ENCODE measurements at regions of chr5 and their contacts with region 1.

Region 1: DNA sequence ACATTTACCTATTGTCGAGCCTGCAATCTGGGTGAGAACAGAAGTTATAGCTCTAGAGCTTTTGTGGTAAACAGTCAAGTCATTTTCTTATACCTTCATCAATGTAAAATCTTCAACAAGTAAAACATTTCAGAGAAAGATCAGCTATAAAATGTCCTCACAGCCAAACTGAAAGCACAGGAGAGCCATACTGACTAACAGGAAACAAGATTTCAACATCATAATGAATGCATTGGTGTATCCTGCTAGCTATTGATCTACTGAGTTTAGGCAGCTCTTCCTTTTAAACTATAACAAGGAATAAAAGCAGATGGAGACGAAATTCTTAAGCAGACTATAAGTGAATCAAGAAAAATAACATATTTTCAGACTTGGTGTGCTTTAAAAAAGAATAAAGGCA is 1522.9 kb upstream of the WWC1 start:
- DNase-seq: no peak
- H3K4me3 Mint-ChIP-seq: peak overlapping the region; percentile 38
- H3K27ac Mint-ChIP-seq: peak overlapping the region; percentile 28
- H3K4me1 Mint-ChIP-seq: peaks cover 20% of the 10 kb centered on the region
- H3K27me3 Mint-ChIP-seq: no peaks in the 10 kb centered on the region
- CTCF ChIP-seq: no peak

Region 2: DNA sequence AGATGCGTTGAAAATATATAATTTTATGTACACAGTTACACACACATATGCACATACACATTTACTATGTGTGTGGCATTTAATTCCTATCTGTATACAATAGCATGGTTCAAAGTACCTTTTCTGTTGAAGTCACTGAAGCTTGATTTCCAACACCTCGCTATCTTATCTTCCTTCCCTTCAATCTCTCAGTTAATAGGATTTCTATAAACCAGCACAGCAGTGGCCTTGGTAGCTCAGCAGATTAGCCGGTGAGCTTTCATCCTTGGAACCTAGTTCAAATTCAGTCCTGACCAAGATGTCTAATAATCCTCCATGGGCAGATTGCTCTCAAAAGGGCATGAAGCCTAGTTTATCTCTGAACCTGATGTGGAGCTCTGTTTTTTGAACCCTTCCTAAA is 873.6 kb before region 1 on chr5:
- CTCF ChIA-PET with region 1: interaction called, 11 read pairs
- intact Hi-C with region 1: no loop called
- DNase-seq: no peak
- H3K4me3 Mint-ChIP-seq: no peak overlapping the region
- H3K27ac Mint-ChIP-seq: no peak overlapping the region
- H3K4me1 Mint-ChIP-seq: no peaks in the 10 kb centered on the region
- H3K27me3 Mint-ChIP-seq: no peaks in the 10 kb centered on the region
- CTCF ChIP-seq: no peak

Region 3: GRCh38 chr5:166618526-166618925 is 150.0 kb before region 1 on chr5:
- CTCF ChIA-PET with region 1: no interaction called
- intact Hi-C with region 1: no loop called
- DNase-seq: no peak
- H3K4me3 Mint-ChIP-seq: no peak overlapping the region
- H3K27ac Mint-ChIP-seq: no peak overlapping the region
- H3K4me1 Mint-ChIP-seq: peaks cover 7% of the 10 kb centered on the region
- H3K27me3 Mint-ChIP-seq: no peaks in the 10 kb centered on the region
- CTCF ChIP-seq: no peak